A673 (cell line): ENCODE measurements at regions of chr18 and their contacts with region 1.

Region 1: DNA sequence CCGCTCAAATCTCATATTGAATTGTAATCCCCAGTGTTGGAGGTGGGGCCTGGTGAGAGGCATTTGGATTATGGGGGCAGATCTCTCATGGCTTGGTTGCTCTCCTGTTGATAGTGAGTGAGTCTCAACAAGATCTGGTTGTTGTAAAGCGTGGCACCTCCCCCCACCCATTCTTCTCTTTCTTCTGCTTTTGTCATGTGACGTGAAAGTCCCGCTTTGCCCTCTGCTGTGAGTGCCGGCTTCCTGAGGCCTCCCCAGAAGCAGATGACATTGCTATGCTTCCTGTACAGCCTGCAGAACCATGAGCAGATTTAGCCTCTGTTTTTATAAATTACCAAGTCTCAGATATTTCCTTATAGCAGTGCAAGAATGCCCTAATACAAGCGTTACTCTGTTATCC is 673.8 kb downstream of the ADCYAP1 start:
- DNase-seq: no peak
- H3K4me3 ChIP-seq: no peak overlapping the region
- H3K27ac ChIP-seq: no peak overlapping the region
- H3K4me1 ChIP-seq: no peaks in the 10 kb centered on the region
- H3K27me3 ChIP-seq: peaks cover 4% of the 10 kb centered on the region
- CTCF ChIP-seq: no peak

Region 2: GRCh38 chr18:1392046-1392445 is 186.5 kb before region 1 on chr18:
- CTCF ChIA-PET with region 1: no interaction called
- POLR2A ChIA-PET with region 1: no interaction called
- intact Hi-C with region 1: no loop called
- DNase-seq: no peak
- H3K4me3 ChIP-seq: no peak overlapping the region
- H3K27ac ChIP-seq: no peak overlapping the region
- H3K4me1 ChIP-seq: no peaks in the 10 kb centered on the region
- H3K27me3 ChIP-seq: peaks cover 5% of the 10 kb centered on the region
- CTCF ChIP-seq: no peak

Region 3: GRCh38 chr18:1539276-1539675 is 39.2 kb before region 1 on chr18:
- CTCF ChIA-PET with region 1: interaction called, 12 read pairs
- POLR2A ChIA-PET with region 1: no interaction called
- intact Hi-C with region 1: no loop called
- DNase-seq: no peak
- H3K4me3 ChIP-seq: no peak overlapping the region
- H3K27ac ChIP-seq: no peak overlapping the region
- H3K4me1 ChIP-seq: no peaks in the 10 kb centered on the region
- H3K27me3 ChIP-seq: no peaks in the 10 kb centered on the region
- CTCF ChIP-seq: no peak

Region 4: GRCh38 chr18:2536493-2536892 is 958.0 kb after region 1 on chr18:
- CTCF ChIA-PET with region 1: no interaction called
- POLR2A ChIA-PET with region 1: no interaction called
- intact Hi-C with region 1: loop called (anchors 5 kb)
- DNase-seq: no peak
- H3K4me3 ChIP-seq: no peak overlapping the region
- H3K27ac ChIP-seq: no peak overlapping the region
- H3K4me1 ChIP-seq: peaks cover 5% of the 10 kb centered on the region
- H3K27me3 ChIP-seq: no peaks in the 10 kb centered on the region
- CTCF ChIP-seq: no peak